GM10248 (cell line): ENCODE measurements at regions of chr6 and their contacts with region 1.

Region 1: DNA sequence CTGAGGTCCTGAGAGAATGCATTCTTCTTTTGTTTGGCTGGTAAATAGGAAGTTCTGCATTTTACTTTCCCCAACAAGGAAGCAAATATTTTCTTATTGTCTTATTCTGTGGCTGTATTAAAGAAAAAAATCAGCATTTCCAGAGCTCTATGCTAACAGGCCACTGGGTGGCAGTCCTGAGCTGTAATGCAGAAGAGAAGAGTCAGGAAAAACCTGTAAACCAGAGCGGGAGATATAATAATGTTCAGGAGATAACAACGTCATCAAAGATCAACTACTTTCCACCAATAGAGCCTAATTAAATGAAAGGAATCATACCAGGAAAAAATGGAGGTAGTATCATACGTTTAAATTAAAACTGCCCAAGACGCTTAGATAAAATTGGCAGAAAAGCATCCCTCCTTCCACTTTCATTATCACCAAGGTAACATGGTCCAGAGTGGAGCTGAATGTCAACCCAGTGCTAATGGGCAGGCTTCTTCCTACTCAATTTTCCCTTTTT is 55.6 kb upstream of the CARMIL1 start:
- DNase-seq: peak; percentile 62
- CTCF ChIP-seq: peak; percentile 92

Region 2: DNA sequence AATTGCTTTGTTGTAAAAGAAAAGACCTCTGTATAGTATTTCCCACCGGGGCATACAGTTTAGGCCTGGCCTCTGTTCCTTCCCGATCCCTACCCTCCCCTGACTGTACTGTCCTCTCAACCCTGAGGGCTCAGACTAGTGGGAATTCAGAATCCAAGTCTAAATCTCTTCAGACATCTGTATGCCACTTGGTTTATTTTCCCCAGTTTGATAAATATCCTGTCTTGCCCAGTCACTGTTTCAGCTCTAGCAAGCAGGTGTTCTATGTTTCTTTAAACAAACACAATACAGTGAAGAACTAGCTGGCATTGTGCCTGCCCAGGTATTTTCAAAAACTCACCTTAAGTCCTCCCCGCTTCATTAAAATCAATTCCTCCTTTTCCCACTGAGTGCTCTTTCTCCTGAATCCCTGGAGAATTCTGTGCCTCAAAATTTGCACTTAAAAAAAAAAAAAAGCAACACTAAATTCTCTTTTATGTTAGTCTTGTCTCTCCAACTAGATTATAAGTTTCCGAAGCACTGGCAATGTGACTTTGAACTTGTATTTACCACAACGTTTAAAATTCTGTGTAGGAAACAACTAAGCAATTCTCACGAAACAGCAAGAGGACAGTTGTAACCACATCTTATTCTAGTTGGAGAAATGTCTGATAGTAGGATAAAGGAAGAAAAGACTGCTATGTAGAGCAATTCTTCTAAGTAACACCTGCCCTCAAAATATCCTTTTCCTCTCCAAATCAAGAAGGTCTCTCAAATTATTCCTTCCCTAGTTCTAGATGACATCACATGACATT is 56.4 kb before region 1 on chr6:
- CTCF ChIA-PET with region 1: no interaction called
- POLR2A ChIA-PET with region 1: no interaction called
- DNase-seq: no peak
- CTCF ChIP-seq: no peak

Region 3: GRCh38 chr6:25205629-25206028 is 17.9 kb before region 1 on chr6:
- CTCF ChIA-PET with region 1: interaction called, 12 read pairs
- POLR2A ChIA-PET with region 1: no interaction called
- DNase-seq: no peak
- CTCF ChIP-seq: no peak

Region 4: DNA sequence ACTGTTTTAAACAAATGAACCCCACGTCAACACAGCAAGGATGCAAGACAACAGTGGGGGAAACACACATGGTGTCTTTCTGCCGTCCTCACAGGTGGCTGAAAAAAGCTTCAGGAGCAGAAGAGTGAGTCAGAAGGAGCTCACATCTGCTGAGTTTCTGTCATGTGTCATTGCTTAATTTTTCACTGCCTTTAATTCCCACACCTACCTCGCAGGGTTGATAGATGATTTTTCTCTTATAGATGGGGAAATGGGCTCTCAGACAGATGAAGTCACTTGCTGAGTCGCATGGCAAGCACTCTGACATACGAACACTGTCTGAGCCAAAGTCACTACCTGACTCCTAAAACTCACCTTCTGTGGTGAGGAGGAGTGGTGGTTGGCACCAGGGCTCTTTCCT is 27.3 kb after region 1 on chr6:
- CTCF ChIA-PET with region 1: interaction called, 16 read pairs
- POLR2A ChIA-PET with region 1: no interaction called
- DNase-seq: peak; percentile 29
- CTCF ChIP-seq: no peak

Region 5: GRCh38 chr6:25564943-25565342 is 341.4 kb after region 1 on chr6:
- CTCF ChIA-PET with region 1: interaction called, 13 read pairs
- POLR2A ChIA-PET with region 1: no interaction called
- DNase-seq: no peak
- CTCF ChIP-seq: no peak